ENCODE measurements at regions of chr7 and their contacts with region 1.

Region 1: DNA sequence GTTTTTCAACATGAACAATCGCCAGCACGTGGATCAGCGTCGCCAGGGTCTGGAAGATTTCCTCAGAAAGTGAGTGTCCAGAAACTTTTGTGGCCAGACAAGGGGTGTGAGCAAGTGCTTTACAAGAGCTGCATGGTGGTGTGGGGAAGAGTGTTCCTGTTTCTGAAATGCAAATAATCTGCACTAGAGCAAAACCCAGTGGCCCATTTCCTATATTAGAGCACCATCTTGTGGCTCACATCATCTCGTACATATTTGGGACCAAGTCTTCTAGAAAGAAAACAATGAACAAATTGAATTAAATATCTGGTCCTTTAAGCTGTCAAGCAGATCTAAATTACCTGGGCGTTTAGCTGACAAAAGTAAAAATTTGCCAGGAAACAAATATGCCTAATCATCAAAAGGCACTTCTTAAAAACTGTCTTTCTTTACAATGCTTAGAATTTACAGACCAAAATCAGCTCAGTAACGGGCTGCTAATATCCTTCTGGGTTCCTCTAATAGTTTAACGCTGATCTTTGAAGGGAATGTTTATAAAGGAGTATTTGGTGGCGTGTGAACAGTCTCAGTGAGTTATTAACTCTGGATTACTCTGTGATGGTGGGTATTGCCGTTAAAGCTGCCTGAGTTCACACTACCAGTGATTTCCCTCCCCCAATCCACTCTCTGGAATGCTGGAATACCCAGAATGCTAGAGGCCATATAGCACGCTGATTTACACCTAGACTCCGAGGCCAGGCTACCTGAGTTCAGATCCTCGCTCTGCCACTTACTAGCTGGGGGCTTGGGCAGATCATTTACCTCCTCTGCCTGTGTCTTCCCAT is 73.6 kb downstream of the SNX10 start:
- DNase-seq: peak; percentile 60 to 67 (median 64)
- H3K4me3 ChIP-seq: no peak overlapping the region
- H3K4me3 Mint-ChIP-seq: no peak overlapping the region
- H3K27ac ChIP-seq: no peak overlapping the region
- H3K27ac Mint-ChIP-seq: peak overlapping the region in 2 of 7 donors; percentile 60 to 65
- H3K4me1 ChIP-seq: peaks cover 8% of the 10 kb centered on the region
- H3K4me1 Mint-ChIP-seq: peaks cover 2 to 8% (median 6%) of the 10 kb centered on the region in 4 donors
- H3K27me3 ChIP-seq: no peaks in the 10 kb centered on the region
- H3K27me3 Mint-ChIP-seq: peaks cover 0 to 2% of the 10 kb centered on the region in 2 donors

Region 2: DNA sequence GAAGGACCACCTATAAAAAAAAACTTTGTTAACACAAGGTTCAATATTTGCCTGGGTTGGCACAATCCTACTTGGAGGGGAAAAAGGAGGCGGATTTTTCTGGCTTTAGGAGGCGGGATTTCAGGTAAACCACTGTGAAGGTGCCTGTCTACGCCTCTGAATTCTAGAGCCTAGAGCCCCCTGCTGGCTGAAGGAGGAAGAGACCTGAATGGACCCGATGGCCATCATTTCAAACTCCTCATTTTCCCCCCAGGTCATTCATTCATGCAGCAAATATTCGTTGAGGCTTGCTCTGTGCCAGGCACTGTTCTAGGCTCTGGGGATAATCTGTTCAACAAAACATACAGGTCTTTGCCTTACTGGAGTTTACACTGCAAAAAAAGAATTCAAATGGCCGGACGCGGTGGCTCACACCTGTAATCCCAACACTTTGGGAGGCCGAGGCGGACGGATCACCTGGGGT is 303.6 kb before region 1 on chr7:
- CTCF ChIA-PET with region 1: interaction called, 7 read pairs
- POLR2A ChIA-PET with region 1: no interaction called
- intact Hi-C with region 1: loop called (anchors 1 kb)
- DNase-seq: peak; percentile 50 to 71 (median 61)
- H3K4me3 ChIP-seq: no peak overlapping the region
- H3K4me3 Mint-ChIP-seq: peak overlapping the region in 1 of 8 donors; percentile 20
- H3K27ac ChIP-seq: no peak overlapping the region
- H3K27ac Mint-ChIP-seq: no peak overlapping the region
- H3K4me1 ChIP-seq: no peaks in the 10 kb centered on the region
- H3K4me1 Mint-ChIP-seq: peaks cover 2 to 5% (median 3%) of the 10 kb centered on the region in 4 donors
- H3K27me3 ChIP-seq: no peaks in the 10 kb centered on the region
- H3K27me3 Mint-ChIP-seq: peaks cover 23 to 24% of the 10 kb centered on the region in 2 donors

Region 3: GRCh38 chr7:26096136-26096535 is 269.2 kb before region 1 on chr7:
- CTCF ChIA-PET with region 1: interaction called, 288 read pairs
- POLR2A ChIA-PET with region 1: interaction called, 7 read pairs
- intact Hi-C with region 1: loop called (anchors 1 kb)
- DNase-seq: no peak
- H3K4me3 ChIP-seq: no peak overlapping the region
- H3K4me3 Mint-ChIP-seq: peak overlapping the region in 1 of 8 donors; percentile 39
- H3K27ac ChIP-seq: no peak overlapping the region
- H3K27ac Mint-ChIP-seq: peak overlapping the region in 4 of 7 donors; percentile 15 to 57 (median 38)
- H3K4me1 ChIP-seq: peaks cover 23% of the 10 kb centered on the region
- H3K4me1 Mint-ChIP-seq: peaks cover 12 to 48% (median 27%) of the 10 kb centered on the region in 4 donors
- H3K27me3 ChIP-seq: no peaks in the 10 kb centered on the region
- H3K27me3 Mint-ChIP-seq: no peaks in the 10 kb centered on the region

Region 4: DNA sequence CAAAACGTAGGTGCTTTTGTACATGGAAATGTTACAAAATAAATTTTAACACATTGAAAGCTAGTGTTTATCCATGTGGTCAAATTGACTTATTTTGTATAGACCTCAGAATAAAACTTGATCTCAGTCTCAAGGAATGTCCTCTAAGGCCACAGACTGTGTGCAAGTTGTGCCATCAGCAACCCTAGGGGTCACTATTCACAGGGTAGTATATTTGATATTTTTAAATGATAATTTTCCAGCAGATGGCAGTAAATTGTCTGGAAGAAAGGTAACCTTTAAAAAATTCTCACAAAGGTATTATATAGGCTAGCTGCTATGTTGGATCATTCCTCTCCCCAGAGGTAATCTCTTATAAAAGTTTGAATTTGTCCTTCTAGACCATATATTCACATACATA is 86.5 kb before region 1 on chr7:
- CTCF ChIA-PET with region 1: interaction called, 60 read pairs
- POLR2A ChIA-PET with region 1: no interaction called
- intact Hi-C with region 1: loop called (anchors 1 kb)
- DNase-seq: peak in 4 of 5 donors; percentile 14 to 33 (median 26)
- H3K4me3 ChIP-seq: no peak overlapping the region
- H3K4me3 Mint-ChIP-seq: peak overlapping the region in 1 of 8 donors; percentile 25
- H3K27ac ChIP-seq: no peak overlapping the region
- H3K27ac Mint-ChIP-seq: no peak overlapping the region
- H3K4me1 ChIP-seq: peaks cover 5% of the 10 kb centered on the region
- H3K4me1 Mint-ChIP-seq: peaks cover 8 to 19% (median 12%) of the 10 kb centered on the region in 4 donors
- H3K27me3 ChIP-seq: no peaks in the 10 kb centered on the region
- H3K27me3 Mint-ChIP-seq: no peaks in the 10 kb centered on the region

Region 5: GRCh38 chr7:26346611-26347203 is 18.6 kb before region 1 on chr7:
- CTCF ChIA-PET with region 1: interaction called, 12 read pairs
- POLR2A ChIA-PET with region 1: no interaction called
- intact Hi-C with region 1: no loop called
- DNase-seq: no peak
- H3K4me3 ChIP-seq: no peak overlapping the region
- H3K4me3 Mint-ChIP-seq: no peak overlapping the region
- H3K27ac ChIP-seq: no peak overlapping the region
- H3K27ac Mint-ChIP-seq: peak overlapping the region in 1 of 7 donors; percentile 23
- H3K4me1 ChIP-seq: no peaks in the 10 kb centered on the region
- H3K4me1 Mint-ChIP-seq: no peaks in the 10 kb centered on the region
- H3K27me3 ChIP-seq: no peaks in the 10 kb centered on the region
- H3K27me3 Mint-ChIP-seq: no peaks in the 10 kb centered on the region

Region 6: DNA sequence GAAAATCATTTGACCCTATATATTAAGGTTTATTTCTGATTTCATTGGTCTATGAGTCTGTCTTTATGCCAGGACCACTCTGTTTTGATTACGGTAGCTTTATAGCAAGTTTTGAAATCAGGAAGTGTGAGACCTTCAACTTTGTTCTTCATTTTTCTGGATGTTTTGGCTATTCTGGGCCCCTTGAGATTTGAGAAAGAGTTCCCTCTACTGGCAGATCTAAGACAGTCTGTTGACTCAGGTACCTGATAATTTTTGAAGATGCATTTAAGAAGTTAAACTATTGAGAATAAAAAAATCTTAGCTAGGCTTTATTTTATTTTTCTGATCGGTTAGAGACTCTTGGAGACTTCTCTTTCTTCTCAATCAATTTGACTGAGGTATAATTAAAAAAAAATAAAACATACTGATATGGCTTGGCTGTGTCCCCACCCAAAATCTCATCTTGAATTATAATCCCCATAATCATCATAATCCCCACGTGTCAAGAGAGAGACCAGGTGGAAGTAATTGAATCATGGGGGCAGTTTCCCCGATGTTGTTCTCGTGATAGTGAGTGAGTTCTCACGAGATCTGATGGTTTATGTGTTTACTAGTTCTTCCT is 135.6 kb after region 1 on chr7:
- CTCF ChIA-PET with region 1: interaction called, 6 read pairs
- POLR2A ChIA-PET with region 1: no interaction called
- intact Hi-C with region 1: loop called (anchors 1 kb)
- DNase-seq: peak in 3 of 5 donors; percentile 3 to 9 (median 8)
- H3K4me3 ChIP-seq: no peak overlapping the region
- H3K4me3 Mint-ChIP-seq: no peak overlapping the region
- H3K27ac ChIP-seq: no peak overlapping the region
- H3K27ac Mint-ChIP-seq: no peak overlapping the region
- H3K4me1 ChIP-seq: no peaks in the 10 kb centered on the region
- H3K4me1 Mint-ChIP-seq: no peaks in the 10 kb centered on the region
- H3K27me3 ChIP-seq: no peaks in the 10 kb centered on the region
- H3K27me3 Mint-ChIP-seq: peaks cover 8 to 16% of the 10 kb centered on the region in 2 donors

Measured in CD4-positive, alpha-beta memory T cell (primary cell).